SK-N-SH (cell line): ENCODE measurements at regions of chr11 and their contacts with region 1.

Region 1: GRCh38 chr11:94741022-94741679 is 27.0 kb upstream of the AMOTL1 start:
- DNase-seq: peak; percentile 82
- H3K4me3 ChIP-seq: peak overlapping the region; percentile 63 to 69
- H3K27ac ChIP-seq: no peak overlapping the region; a peak in 1 of 4 replicates
- H3K4me1 ChIP-seq: peaks cover 8 to 10% of the 10 kb centered on the region in 2 experiments; a peak in 1 of 4 replicates
- H3K27me3 ChIP-seq: no peaks in the 10 kb centered on the region
- CTCF ChIP-seq: peak; percentile 60
- EP300 ChIP-seq: no peak
- RAD21 ChIP-seq: peak; percentile 46

Region 2: DNA sequence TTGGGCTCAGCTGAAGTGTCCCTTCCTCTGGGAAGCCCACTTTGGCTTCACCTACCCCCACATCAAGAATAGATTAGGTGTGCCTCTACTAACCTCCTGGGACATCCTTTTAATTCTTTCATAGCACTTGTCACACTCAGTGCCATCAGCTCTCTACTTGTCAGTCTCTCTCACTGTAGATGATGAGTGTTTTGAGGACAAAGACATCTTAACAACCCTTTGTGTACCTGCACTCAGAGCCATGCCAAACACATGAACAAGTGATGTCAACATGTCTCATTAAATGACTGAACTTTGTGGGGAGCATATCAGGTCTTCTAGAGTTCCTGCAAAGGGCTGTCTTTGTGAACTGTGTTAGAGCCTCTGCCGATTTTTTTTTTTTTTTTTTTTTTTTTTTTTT is 60.0 kb before region 1 on chr11:
- CTCF ChIA-PET with region 1: no interaction called
- POLR2A ChIA-PET with region 1: no interaction called
- DNase-seq: no peak
- H3K4me3 ChIP-seq: no peak overlapping the region
- H3K27ac ChIP-seq: no peak overlapping the region
- H3K4me1 ChIP-seq: no peaks in the 10 kb centered on the region
- H3K27me3 ChIP-seq: no peaks in the 10 kb centered on the region
- CTCF ChIP-seq: no peak
- EP300 ChIP-seq: no peak
- RAD21 ChIP-seq: no peak

Region 3: DNA sequence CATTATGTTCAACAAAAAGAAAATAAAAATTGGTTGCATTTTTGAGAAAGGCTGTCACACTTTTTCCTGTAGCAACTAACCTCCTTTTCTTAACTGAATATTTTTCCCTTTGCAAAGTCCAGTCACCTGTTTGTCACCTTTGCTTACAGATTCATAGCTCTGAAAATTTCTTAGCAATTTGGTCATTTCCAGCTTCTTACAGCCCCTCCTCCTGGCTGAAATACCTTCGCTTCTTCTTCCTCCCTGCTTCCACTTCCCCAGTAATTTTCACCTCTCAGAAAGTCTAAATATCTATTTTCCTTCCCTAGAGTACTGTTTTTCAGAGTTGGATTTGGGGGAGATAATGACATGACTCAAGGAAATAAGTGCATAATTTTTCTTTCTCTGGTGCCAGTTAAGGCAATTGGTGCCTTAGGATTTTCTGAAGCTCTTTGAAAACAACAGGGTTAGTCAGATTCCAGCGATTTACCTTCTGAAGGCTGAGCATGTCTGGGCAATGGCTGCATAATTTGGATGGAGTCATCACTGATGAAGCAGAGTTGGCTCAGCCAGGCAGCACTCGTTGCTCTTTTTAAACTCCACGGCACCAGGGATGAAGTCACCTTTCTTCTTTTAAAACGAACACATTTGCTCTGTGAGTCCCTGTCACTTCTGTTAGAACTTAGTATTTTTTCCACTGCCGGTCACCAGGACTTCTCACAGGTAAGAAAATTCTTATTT is 35.1 kb before region 1 on chr11:
- CTCF ChIA-PET with region 1: no interaction called
- POLR2A ChIA-PET with region 1: no interaction called
- DNase-seq: no peak
- H3K4me3 ChIP-seq: no peak overlapping the region; a peak in 1 of 4 replicates
- H3K27ac ChIP-seq: peak overlapping the region in 1 of 2 experiments; percentile 22; a peak in 3 of 4 replicates
- H3K4me1 ChIP-seq: no peaks in the 10 kb centered on the region; a peak in 1 of 4 replicates
- H3K27me3 ChIP-seq: no peaks in the 10 kb centered on the region
- CTCF ChIP-seq: no peak
- EP300 ChIP-seq: no peak
- RAD21 ChIP-seq: no peak

Region 4: GRCh38 chr11:94757037-94757735 is 16.0 kb after region 1 on chr11:
- CTCF ChIA-PET with region 1: interaction called, 36 read pairs
- POLR2A ChIA-PET with region 1: no interaction called
- DNase-seq: no peak
- H3K4me3 ChIP-seq: no peak overlapping the region
- H3K27ac ChIP-seq: no peak overlapping the region
- H3K4me1 ChIP-seq: peaks cover 0 to 1% of the 10 kb centered on the region in 2 experiments; a peak in 3 of 4 replicates
- H3K27me3 ChIP-seq: no peaks in the 10 kb centered on the region
- CTCF ChIP-seq: no peak
- EP300 ChIP-seq: no peak
- RAD21 ChIP-seq: no peak

Region 5: DNA sequence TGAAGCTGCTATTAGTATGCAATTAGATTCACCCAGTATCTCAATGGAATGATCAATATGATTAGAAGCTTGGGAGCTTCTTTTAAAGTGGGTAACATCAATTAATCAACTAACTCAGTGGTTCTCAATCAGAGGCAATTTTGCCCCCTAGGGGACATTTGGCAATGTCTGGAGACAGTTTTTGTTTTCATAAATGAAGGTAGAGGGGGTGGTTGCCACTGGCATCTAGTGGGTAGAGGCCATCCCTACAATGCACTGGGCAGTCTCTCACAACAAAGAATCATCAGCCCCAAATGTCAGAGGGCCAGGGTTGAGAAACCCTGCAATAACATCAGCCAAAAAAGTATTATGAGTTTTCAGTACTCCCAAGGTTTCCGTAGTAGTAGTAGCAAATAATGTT is 21.1 kb after region 1 on chr11:
- CTCF ChIA-PET with region 1: interaction called, 37 read pairs
- POLR2A ChIA-PET with region 1: no interaction called
- DNase-seq: no peak
- H3K4me3 ChIP-seq: no peak overlapping the region
- H3K27ac ChIP-seq: no peak overlapping the region
- H3K4me1 ChIP-seq: peaks cover 0 to 4% of the 10 kb centered on the region in 2 experiments; a peak in 3 of 4 replicates
- H3K27me3 ChIP-seq: no peaks in the 10 kb centered on the region
- CTCF ChIP-seq: peak; percentile 49
- EP300 ChIP-seq: no peak
- RAD21 ChIP-seq: peak; percentile 62

Region 6: DNA sequence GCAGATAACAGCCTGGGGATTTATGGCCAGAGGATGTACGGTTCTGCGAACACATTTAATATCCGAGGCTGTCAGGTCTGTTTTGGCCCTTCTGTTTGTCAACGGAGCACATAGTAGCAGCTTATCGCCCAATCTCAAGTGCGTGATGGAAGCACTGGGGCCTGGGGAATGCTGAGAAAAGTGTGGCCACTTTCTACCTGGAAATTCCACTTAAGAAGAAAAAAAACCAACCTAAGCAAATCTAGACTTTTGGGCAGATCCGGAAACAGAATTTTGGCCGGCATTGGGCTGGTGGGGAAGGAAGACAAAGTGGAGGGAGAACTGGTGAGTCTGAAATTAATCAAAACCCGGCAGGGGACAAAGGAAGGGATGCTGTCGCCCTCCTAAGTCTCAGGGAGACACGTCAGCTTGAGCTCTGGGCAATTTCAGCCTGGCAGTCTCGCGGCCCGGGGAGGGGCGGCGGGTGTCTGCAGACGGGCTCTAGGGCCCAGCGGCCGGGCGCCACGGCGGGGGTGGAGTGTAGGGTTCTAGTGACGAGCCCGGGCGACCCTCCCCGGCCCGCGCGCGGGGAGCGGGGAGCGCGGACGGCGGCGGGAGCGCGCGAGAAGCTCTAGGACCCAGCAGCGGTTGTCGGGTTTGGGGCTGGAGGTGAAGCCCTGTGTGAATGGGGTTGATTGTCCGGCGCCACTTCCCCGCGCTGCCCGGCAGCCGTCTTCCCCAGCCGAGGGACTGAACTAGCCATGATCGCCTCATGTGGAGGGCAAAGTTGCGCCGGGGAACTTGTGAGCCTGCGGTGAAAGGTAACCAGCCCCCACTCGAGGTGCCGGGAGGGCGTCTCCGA is 26.8 kb after region 1 on chr11 and contains the start of gene AMOTL1:
- CTCF ChIA-PET with region 1: interaction called, 37 read pairs
- POLR2A ChIA-PET with region 1: interaction called, 17 read pairs
- DNase-seq: peak; percentile 94
- H3K4me3 ChIP-seq: peak within 1 kb of the TSS; percentile 89 to 97
- H3K27ac ChIP-seq: peak within 1 kb of the TSS; percentile 75 to 95
- H3K4me1 ChIP-seq: peaks cover 14 to 21% of the 10 kb centered on the region in 2 experiments; a peak in 3 of 4 replicates
- H3K27me3 ChIP-seq: no peaks in the 10 kb centered on the region
- CTCF ChIP-seq: no peak; the same call in 1 of the 2 replicates
- EP300 ChIP-seq: peak in 1 of 2 experiments; percentile 60; a peak in 2 of 4 replicates
- RAD21 ChIP-seq: peak; percentile 53
- polyA plus RNA-seq, gene AMOTL1: 10.7 and 11.7 TPM in 2 replicates

Region 7: GRCh38 chr11:94786264-94787126 is 45.3 kb after region 1 on chr11:
- CTCF ChIA-PET with region 1: interaction called, 14 read pairs
- POLR2A ChIA-PET with region 1: no interaction called
- DNase-seq: peak; percentile 46
- H3K4me3 ChIP-seq: no peak overlapping the region
- H3K27ac ChIP-seq: peak overlapping the region in 1 of 2 experiments; percentile 19; a peak in 2 of 4 replicates
- H3K4me1 ChIP-seq: peaks cover 16 to 62% of the 10 kb centered on the region in 2 experiments
- H3K27me3 ChIP-seq: no peaks in the 10 kb centered on the region
- CTCF ChIP-seq: peak; percentile 71
- EP300 ChIP-seq: no peak
- RAD21 ChIP-seq: peak; percentile 57

Region 8: DNA sequence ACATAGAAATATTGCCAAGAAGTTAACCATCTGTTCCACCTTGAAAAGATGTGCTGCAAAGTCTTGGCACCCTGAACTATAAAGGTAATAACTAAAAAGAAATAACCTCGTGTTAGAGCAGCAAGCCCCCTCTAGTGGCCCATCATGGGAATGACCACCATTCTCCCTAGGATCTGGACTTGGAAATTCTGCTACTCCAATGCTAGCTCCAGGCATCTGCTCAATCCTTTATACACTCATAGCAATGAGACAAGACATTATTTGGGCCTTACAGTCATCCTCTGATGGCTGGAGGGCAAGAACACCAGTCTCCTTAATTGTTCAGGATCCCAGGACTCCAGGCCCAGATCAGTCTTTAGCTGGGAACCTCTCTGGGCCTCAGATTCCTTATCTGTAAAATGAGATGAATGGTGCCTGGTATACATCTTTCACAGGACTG is 156.2 kb after region 1 on chr11:
- CTCF ChIA-PET with region 1: interaction called, 10 read pairs
- POLR2A ChIA-PET with region 1: no interaction called
- DNase-seq: peak; percentile 63
- H3K4me3 ChIP-seq: no peak overlapping the region; a peak in 1 of 4 replicates
- H3K27ac ChIP-seq: peak overlapping the region in 1 of 2 experiments; percentile 22; a peak in 1 of 4 replicates
- H3K4me1 ChIP-seq: peaks cover 0 to 5% of the 10 kb centered on the region in 2 experiments; a peak in 1 of 4 replicates
- H3K27me3 ChIP-seq: no peaks in the 10 kb centered on the region
- CTCF ChIP-seq: peak; percentile 95
- EP300 ChIP-seq: no peak
- RAD21 ChIP-seq: peak; percentile 83